Natural killer cell (primary cell): ENCODE measurements at regions of chrX and their contacts with region 1.

Region 1: DNA sequence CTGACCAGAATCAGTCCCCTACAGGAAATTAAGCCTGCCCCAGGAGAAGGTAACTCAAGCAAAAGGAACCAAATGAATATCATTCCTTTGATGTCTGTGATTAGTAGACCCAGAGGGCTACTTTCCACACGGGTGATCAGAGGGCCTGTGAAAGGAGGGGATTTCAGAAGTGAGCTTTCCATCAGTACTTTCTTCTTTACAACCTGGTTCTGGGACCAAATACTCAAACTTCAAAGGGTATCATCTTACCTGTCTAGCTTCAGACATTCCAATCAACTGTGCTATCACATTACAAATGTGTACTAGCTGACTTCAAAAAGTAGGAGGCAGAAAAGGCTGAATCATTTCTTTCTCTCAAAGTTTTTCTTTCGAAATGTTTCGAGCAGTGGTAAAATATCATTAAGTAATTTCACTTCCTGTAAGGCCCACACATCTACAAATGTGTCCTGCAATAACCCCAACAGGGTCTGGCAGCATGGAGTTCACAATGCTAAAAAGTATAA is 23.9 kb downstream of the ACSL4 start:
- DNase-seq: peak in 1 of 2 donors; percentile 14
- ATAC-seq: peak; percentile 70 to 81 (median 74)
- H3K4me3 ChIP-seq: no peak overlapping the region
- H3K4me3 Mint-ChIP-seq: peak overlapping the region; percentile 55
- H3K27ac ChIP-seq: peak overlapping the region; percentile 50
- H3K27ac Mint-ChIP-seq: peak overlapping the region; percentile 78 to 83
- H3K4me1 ChIP-seq: peaks cover 15% of the 10 kb centered on the region
- H3K4me1 Mint-ChIP-seq: peaks cover 29 to 41% of the 10 kb centered on the region in 2 donors
- H3K27me3 ChIP-seq: no peaks in the 10 kb centered on the region
- H3K27me3 Mint-ChIP-seq: no peaks in the 10 kb centered on the region
- CTCF ChIP-seq: no peak

Region 2: DNA sequence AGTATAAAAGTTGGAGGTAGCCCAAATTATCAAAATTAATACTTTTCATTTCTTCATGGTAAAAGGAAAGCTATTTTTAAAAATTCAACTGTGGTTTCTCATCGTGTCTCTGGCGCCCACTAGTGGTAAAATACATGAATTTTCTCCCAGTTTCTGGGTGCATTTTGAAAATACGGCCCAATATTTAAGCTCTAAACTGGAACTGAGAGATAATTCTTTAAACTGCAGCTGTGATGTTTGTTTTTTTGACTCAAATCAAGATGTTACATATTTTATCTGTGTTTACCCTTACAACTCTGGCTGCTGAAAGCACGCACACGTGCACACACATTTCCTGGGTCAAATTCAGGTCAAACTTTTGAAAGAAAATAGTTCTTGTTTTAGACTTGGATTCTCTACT is 147.8 kb after region 1 on chrX:
- intact Hi-C with region 1: loop called (anchors 1 kb)
- DNase-seq: peak in 1 of 2 donors; percentile 64
- ATAC-seq: no peak
- H3K4me3 ChIP-seq: no peak overlapping the region
- H3K4me3 Mint-ChIP-seq: no peak overlapping the region
- H3K27ac ChIP-seq: no peak overlapping the region
- H3K27ac Mint-ChIP-seq: no peak overlapping the region
- H3K4me1 ChIP-seq: no peaks in the 10 kb centered on the region
- H3K4me1 Mint-ChIP-seq: no peaks in the 10 kb centered on the region
- H3K27me3 ChIP-seq: no peaks in the 10 kb centered on the region
- H3K27me3 Mint-ChIP-seq: peaks cover 2 to 23% of the 10 kb centered on the region in 2 donors
- CTCF ChIP-seq: peak; percentile 71

Region 3: GRCh38 chrX:109890895-109891502 is 181.8 kb after region 1 on chrX:
- intact Hi-C with region 1: loop called (anchors 1 kb)
- DNase-seq: peak; percentile 23 to 71
- ATAC-seq: peak; percentile 68 to 86 (median 70)
- H3K4me3 ChIP-seq: no peak overlapping the region
- H3K4me3 Mint-ChIP-seq: no peak overlapping the region
- H3K27ac ChIP-seq: no peak overlapping the region
- H3K27ac Mint-ChIP-seq: no peak overlapping the region
- H3K4me1 ChIP-seq: peaks cover 14% of the 10 kb centered on the region
- H3K4me1 Mint-ChIP-seq: no peaks in the 10 kb centered on the region
- H3K27me3 ChIP-seq: no peaks in the 10 kb centered on the region
- H3K27me3 Mint-ChIP-seq: peaks cover 5 to 18% of the 10 kb centered on the region in 2 donors
- CTCF ChIP-seq: peak; percentile 71